Activated B cell treated with CpG ODN at 0.5 μM for 24 hours (primary cell): ENCODE measurements at regions of chr19 and their contacts with region 1.

Region 1: GRCh38 chr19:35352448-35353304 is 5.0 kb downstream of the FFAR1 start:
- DNase-seq: peak; percentile 54
- ATAC-seq: peak; percentile 46
- H3K4me3 Mint-ChIP-seq: no peak overlapping the region
- H3K27ac Mint-ChIP-seq: peak overlapping the region; percentile 26
- H3K4me1 Mint-ChIP-seq: peaks cover 40% of the 10 kb centered on the region
- H3K27me3 Mint-ChIP-seq: no peaks in the 10 kb centered on the region
- CTCF ChIP-seq: peak; percentile 23

Region 2: DNA sequence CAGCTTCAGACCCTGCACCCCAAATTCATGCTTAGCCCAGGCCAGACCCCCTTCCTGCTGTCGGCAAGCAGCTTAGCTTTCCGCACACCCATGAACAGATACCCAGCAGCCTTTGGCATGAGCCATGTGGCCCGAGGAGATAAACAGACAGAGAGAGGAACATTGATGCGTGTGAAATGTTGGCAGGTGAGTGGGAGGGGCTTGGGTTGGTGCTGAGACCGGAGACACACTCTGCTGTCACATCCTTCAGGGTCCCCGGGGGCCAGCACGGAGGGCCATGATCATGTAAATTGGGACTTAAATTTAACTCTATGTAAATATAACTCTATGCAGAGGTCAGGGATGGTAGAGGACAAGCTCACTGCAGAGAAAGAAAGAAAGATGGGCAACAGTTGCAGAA is 22.2 kb before region 1 on chr19:
- CTCF ChIA-PET with region 1: interaction called, 37 read pairs
- POLR2A ChIA-PET with region 1: interaction called, 645 read pairs
- intact Hi-C with region 1: loop called (anchors 1 kb)
- DNase-seq: peak; percentile 76
- ATAC-seq: peak; percentile 81
- H3K4me3 Mint-ChIP-seq: peak overlapping the region; percentile 90
- H3K27ac Mint-ChIP-seq: peak overlapping the region; percentile 94
- H3K4me1 Mint-ChIP-seq: peaks cover 85% of the 10 kb centered on the region
- H3K27me3 Mint-ChIP-seq: no peaks in the 10 kb centered on the region
- CTCF ChIP-seq: no peak

Region 3: DNA sequence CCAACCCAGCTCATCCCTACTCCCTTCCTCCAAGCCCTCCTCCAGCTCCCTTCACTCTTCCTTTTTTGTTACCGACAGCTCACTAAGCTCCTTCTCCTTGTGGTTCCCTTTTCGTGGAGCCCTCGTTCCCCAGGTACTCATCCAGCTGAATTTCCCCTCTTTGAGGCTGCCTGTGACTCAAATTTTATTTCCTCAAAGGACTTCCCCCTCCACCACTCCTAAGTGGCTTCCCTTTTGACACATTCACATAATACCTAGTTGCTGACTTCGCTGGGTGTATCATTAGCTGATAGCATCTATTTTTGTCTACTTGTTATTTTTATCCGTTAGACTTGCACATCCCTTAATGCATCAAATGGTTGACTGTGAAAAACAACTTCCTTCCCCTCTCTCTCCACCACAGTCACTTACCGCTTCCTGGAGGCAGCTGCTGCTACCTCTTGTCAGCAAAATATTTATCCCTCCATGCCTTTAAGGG is 109.8 kb after region 1 on chr19:
- CTCF ChIA-PET with region 1: interaction called, 99 read pairs
- POLR2A ChIA-PET with region 1: interaction called, 76 read pairs
- intact Hi-C with region 1: loop called (anchors 1 kb)
- DNase-seq: peak; percentile 35
- ATAC-seq: peak; percentile 76
- H3K4me3 Mint-ChIP-seq: peak overlapping the region; percentile 76
- H3K27ac Mint-ChIP-seq: peak overlapping the region; percentile 85
- H3K4me1 Mint-ChIP-seq: peaks cover 64% of the 10 kb centered on the region
- H3K27me3 Mint-ChIP-seq: no peaks in the 10 kb centered on the region
- CTCF ChIP-seq: no peak

Region 4: GRCh38 chr19:35495107-35496064 is 142.7 kb after region 1 on chr19:
- CTCF ChIA-PET with region 1: interaction called, 66 read pairs
- POLR2A ChIA-PET with region 1: interaction called, 11 read pairs
- intact Hi-C with region 1: loop called (anchors 1 kb)
- DNase-seq: peak; percentile 62
- ATAC-seq: peak; percentile 100
- H3K4me3 Mint-ChIP-seq: no peak overlapping the region
- H3K27ac Mint-ChIP-seq: no peak overlapping the region
- H3K4me1 Mint-ChIP-seq: peaks cover 8% of the 10 kb centered on the region
- H3K27me3 Mint-ChIP-seq: peaks cover 5% of the 10 kb centered on the region
- CTCF ChIP-seq: peak; percentile 67

Region 5: GRCh38 chr19:35592226-35592625 is 239.6 kb after region 1 on chr19:
- CTCF ChIA-PET with region 1: interaction called, 5 read pairs
- POLR2A ChIA-PET with region 1: no interaction called
- intact Hi-C with region 1: loop called (anchors 1 kb)
- DNase-seq: no peak
- ATAC-seq: peak; percentile 54
- H3K4me3 Mint-ChIP-seq: no peak overlapping the region
- H3K27ac Mint-ChIP-seq: no peak overlapping the region
- H3K4me1 Mint-ChIP-seq: no peaks in the 10 kb centered on the region
- H3K27me3 Mint-ChIP-seq: no peaks in the 10 kb centered on the region
- CTCF ChIP-seq: no peak